ENCODE measurements at regions of chr12 and their contacts with region 1.

Region 1: DNA sequence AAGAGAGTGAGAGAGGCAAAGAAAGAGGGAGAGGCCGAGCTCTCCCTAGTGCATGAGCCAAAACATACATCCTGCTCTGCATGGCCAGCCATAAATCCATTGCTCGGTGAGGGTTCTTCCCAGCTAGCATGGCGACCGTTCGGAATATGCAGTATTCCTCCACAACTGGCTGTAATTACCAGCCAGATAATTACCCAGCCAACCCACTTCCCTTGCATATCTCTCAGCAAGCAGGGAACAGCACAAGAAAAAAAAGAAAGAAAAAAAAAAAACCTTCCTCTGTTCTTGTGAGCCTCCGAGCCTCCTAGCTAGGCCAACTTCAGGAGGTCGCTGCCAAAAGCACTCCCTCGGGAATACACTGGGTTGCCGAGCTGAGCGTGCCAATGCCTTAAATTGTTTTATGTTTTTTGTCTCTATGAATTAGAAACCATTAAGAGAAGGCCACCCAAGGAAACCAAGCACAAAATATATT is 567.9 kb downstream of the MED13L start:
- DNase-seq: no peak
- H3K4me3 ChIP-seq: no peak overlapping the region
- H3K27ac ChIP-seq: no peak overlapping the region
- H3K4me1 ChIP-seq: no peaks in the 10 kb centered on the region
- CTCF ChIP-seq: no peak

Region 2: DNA sequence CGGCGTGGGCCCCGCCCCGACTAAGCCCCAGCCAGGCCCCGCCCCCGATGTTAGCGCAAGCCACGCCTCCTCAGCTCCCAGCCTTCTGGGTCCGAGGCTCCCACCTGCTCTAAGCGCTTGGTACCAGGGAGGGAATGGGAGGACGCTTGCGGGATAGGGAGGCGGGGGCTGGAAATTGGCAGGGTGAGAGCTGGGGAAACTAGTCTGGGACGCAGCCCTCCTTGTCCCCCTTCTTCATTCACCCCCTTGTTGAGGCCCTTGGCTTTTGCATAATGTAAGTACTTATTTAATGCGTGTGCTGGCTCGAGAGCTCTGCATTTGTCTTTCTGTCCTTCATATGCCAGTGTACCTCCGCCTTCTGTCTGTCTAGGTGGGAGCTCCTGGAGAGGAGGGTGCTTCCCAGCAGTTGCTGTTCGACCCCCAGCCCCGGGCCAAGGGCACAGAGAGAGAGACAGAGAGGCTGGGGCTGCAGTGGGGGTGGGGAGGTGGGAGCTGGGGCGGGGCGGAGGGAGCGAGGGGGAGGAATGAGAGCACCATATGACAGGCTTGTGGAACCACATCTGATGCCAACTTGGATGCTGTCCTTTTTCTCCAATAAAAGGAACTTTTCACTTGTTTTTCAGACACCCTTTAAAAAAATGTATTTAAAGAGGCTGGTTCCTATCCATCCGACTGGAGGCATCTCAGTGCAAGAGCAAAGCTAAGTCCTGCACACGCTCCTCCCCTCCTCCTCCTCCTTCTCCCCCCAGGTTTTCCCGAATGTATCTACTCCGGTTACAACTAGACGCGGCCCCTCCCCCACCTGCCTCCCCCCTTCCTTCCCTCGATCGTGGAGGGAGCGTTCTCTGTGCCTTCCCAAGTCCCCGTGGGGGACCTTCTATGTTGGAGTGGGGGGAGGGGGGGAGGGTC is 824.0 kb after region 1 on chr12:
- CTCF ChIA-PET with region 1: interaction called, 12 read pairs
- POLR2A ChIA-PET with region 1: no interaction called
- intact Hi-C with region 1: no loop called
- DNase-seq: peak; percentile 81
- H3K4me3 ChIP-seq: peak overlapping the region; percentile 66
- H3K27ac ChIP-seq: no peak overlapping the region
- H3K4me1 ChIP-seq: peaks cover 12% of the 10 kb centered on the region
- CTCF ChIP-seq: no peak

Measured in OCI-LY7 (cell line).